Posterior cingulate gyrus (tissue), 11 donors: ENCODE measurements at regions of chr2 and their contacts with region 1.

Region 1: DNA sequence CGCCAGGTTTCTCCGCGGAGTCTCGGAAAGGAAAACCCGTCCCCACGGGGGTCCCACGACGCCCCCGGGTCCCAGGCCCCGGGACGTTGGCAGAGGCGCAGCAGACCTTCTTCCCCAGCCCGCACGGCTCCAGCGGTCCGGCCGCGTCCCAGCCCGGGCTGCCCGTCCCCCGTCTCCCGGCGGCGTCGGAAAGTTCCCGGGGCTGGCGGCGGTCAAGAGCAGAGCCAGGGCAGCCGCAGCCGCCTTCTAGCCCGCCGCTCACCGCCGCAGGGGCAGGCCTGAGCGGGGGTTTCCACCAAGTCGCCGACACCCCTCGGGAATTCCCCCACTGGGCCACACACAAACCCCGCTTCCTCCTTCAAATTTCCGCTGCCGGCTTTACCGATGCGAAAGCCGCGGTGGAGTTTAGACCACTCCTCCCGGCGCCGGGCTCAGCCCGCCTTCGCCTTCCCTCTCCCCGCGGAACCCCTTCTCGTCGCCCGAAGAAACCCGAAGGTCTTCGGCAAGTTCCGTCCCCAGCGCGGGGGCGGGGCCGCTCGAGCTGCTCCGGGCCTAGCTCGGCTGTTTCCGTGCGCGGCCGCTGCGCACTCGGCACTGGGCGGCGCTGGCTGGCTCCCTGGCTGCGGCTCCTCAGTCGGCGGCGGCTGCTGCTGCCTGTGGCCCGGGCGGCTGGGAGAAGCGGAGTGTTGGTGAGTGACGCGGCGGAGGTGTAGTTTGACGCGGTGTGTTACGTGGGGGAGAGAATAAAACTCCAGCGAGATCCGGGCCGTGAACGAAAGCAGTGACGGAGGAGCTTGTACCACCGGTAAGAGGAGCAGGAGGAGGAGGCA is at the start of gene CREB1:
- DNase-seq: peak; percentile 97 to 100 (median 98)

Region 2: DNA sequence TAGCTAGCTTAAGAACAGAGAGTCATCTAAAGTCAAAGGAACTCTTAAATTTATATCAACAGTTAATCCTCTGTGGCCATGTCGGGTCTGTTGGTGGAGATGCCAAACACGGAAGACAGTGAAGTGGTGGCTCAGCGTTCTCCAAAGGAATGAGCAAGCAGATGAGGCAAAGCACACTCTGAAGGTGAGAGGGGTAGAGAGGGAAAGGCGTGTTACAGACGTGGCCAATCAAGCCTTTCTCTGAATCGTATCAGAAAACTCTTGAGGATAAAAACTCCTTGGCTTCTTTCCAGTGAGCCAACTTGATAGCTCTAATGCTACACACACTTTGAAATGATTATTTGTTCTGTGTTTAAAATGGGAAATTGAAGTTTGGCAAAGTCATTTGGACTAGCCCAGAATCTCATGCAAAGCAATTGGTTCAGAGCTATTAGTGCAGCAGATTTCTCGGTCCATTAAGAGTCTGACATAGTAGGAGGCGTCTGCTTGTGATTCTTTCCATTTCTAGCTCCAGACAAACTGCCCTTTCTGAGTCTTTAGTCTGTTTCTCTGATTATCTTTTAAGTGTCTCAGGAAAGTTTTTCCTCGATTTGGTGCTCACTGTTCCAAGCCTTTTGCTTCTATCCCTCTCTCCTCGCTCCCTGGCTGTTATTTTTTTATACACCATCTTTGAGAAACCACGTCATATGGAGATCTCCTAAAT is 647.7 kb before region 1 on chr2:
- intact Hi-C with region 1: no loop called
- DNase-seq: no peak

Region 3: GRCh38 chr2:207710814-207711740 is 181.5 kb after region 1 on chr2 and contains the start of gene CCNYL1:
- intact Hi-C with region 1: loop called (anchors 1 kb)
- DNase-seq: peak; percentile 98 to 100 (median 99)

Region 4: DNA sequence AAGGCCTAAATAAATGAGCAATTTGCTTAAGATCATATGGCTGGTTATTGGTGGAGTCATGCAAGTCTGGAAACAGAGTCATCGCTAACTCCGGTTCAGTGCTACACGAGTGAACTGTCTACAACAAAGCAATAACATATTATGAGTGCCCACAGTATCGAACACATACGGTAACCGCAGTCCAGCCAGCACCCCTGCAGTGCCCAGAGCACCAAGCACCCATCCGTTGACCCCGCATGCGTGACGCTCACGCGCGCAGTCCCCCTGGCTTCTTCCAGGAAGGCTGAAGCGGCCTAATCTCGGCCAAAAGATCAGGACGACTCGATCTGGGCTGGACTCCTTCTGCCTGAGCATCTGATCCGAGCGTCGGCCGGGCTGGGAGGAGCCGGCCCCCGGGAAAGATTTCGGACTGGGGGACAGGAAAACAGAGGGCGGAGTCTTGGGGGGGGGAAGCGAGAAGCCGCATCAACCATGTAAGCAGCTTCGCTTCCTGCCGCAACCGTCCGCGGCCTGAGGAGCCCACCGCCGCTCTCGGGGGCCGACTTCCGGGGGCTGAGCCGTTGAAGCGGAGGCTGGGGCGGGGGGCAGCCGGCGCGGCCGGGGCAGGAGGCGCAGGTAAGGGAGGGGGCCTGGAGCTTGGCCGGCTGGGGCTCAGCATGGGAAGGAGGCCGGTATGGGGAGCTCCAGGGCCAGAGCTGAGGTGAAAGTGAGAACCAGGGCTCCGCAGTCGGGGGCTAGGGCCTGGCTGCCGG is 736.4 kb after region 1 on chr2 and contains the start of gene PIKFYVE:
- intact Hi-C with region 1: loop called (anchors 10 kb)
- DNase-seq: peak; percentile 97 to 100 (median 98)